WTC11 (cell line): ENCODE measurements at regions of chr18 and their contacts with region 1.

Region 1: GRCh38 chr18:62982600-62983251 is 267.4 kb downstream of the PHLPP1 start:
- DNase-seq: peak; percentile 61
- ATAC-seq: peak; percentile 90
- H3K4me3 Mint-ChIP-seq: no peak overlapping the region
- H3K27ac Mint-ChIP-seq: no peak overlapping the region
- H3K4me1 Mint-ChIP-seq: peaks cover 12% of the 10 kb centered on the region
- H3K27me3 Mint-ChIP-seq: no peaks in the 10 kb centered on the region
- CTCF ChIP-seq: peak; percentile 76

Region 2: GRCh38 chr18:62584241-62585120 is 398.2 kb before region 1 on chr18:
- CTCF ChIA-PET with region 1: interaction called, 26 read pairs
- POLR2A ChIA-PET with region 1: no interaction called
- DNase-seq: peak; percentile 93
- ATAC-seq: peak; percentile 83
- H3K4me3 Mint-ChIP-seq: peak overlapping the region; percentile 54
- H3K27ac Mint-ChIP-seq: peak overlapping the region; percentile 85
- H3K4me1 Mint-ChIP-seq: peaks cover 29% of the 10 kb centered on the region
- H3K27me3 Mint-ChIP-seq: no peaks in the 10 kb centered on the region
- CTCF ChIP-seq: peak; percentile 80

Region 3: DNA sequence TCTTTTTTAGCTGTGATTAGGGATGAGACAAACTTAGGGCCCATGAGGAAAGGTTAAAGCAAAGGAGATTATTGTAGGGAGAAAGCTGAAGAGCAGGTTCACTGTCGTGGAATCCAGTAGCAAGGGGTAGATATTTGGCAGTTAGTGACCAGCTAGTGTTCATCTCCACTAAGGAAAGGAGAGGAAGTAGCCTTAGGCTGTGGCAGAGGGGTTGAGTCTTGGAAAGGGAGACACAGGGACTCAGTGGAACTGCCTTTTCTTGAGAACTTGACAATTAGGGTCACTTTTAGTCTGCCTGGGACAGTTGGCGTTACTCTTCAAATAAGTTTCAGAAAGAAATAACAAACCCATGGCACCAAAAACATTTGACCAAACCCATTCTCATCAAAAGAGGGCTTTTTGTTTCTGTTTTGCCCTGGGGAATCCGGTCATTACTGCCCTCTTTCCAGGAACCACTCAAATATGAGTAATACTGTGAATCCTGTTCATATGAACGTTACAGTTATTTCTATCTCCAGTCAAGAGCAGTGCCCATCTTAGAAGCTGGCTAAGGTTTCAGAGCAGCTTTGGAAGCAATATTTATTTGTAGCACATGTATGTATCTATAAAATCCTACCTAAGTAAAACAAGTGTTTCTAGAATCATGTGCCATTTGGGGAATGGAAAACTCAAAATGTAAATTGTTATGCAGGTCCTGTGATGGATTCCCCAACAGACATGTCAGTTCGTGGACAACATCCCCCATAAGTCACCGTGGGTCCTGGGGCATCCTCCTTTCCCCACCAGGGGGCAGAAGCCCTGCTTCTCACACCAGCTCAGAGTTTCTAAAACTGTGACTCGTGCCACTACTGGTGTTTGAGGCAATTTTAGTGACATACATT is 344.7 kb before region 1 on chr18:
- CTCF ChIA-PET with region 1: interaction called, 10 read pairs
- POLR2A ChIA-PET with region 1: no interaction called
- DNase-seq: peak; percentile 78
- ATAC-seq: peak; percentile 85
- H3K4me3 Mint-ChIP-seq: no peak overlapping the region
- H3K27ac Mint-ChIP-seq: peak overlapping the region; percentile 13; the same call in 1 of the 2 replicates
- H3K4me1 Mint-ChIP-seq: peaks cover 18% of the 10 kb centered on the region
- H3K27me3 Mint-ChIP-seq: no peaks in the 10 kb centered on the region
- CTCF ChIP-seq: peak; percentile 75

Region 4: GRCh38 chr18:62672600-62672999 is 310.1 kb before region 1 on chr18:
- CTCF ChIA-PET with region 1: no interaction called
- POLR2A ChIA-PET with region 1: no interaction called
- DNase-seq: no peak
- ATAC-seq: no peak
- H3K4me3 Mint-ChIP-seq: no peak overlapping the region
- H3K27ac Mint-ChIP-seq: no peak overlapping the region
- H3K4me1 Mint-ChIP-seq: no peaks in the 10 kb centered on the region
- H3K27me3 Mint-ChIP-seq: no peaks in the 10 kb centered on the region
- CTCF ChIP-seq: no peak

Region 5: DNA sequence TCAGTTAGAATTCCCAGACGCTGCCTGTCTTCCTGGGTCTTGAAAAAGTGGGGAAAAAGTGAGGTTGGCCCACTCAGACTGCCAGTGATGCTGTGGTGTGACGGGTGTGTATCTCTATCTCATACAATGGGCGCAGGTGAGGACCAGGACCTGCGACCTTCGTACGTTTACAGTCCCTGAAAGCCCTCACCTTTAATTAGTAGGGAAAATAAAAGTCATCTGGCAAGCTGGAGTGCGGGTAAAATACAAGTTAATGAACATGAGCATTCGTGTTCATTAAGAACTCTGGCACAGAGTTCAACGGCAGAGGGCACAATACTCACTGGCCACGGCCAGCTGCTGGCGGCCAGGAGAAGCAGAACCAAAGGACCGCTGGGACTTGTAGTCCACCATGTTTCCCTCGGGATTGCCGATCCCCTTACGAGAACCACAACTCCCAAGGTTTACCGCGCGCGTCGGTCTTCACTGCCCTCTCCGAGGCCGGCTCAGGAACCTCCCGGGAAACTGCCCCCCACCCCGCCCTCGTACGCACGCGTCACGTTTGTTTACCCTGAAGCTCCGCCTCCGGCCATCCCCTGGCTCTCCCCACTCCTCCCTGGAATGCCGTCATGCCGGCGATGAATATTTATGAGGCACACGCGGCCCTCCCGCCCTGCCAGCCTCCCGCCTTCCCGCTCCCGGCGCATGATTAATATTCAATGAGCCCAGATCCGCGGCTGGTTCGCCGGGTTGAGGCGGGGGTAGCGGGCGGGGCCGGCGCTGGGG is 267.9 kb before region 1 on chr18:
- CTCF ChIA-PET with region 1: interaction called, 12 read pairs
- POLR2A ChIA-PET with region 1: no interaction called
- DNase-seq: peak; percentile 100
- ATAC-seq: peak; percentile 91
- H3K4me3 Mint-ChIP-seq: peak overlapping the region; percentile 75
- H3K27ac Mint-ChIP-seq: peak overlapping the region; percentile 99
- H3K4me1 Mint-ChIP-seq: peaks cover 34% of the 10 kb centered on the region
- H3K27me3 Mint-ChIP-seq: no peaks in the 10 kb centered on the region
- CTCF ChIP-seq: 0 out of 2 replicates have a peak, but pooled peaks have one; percentile 20

Region 6: DNA sequence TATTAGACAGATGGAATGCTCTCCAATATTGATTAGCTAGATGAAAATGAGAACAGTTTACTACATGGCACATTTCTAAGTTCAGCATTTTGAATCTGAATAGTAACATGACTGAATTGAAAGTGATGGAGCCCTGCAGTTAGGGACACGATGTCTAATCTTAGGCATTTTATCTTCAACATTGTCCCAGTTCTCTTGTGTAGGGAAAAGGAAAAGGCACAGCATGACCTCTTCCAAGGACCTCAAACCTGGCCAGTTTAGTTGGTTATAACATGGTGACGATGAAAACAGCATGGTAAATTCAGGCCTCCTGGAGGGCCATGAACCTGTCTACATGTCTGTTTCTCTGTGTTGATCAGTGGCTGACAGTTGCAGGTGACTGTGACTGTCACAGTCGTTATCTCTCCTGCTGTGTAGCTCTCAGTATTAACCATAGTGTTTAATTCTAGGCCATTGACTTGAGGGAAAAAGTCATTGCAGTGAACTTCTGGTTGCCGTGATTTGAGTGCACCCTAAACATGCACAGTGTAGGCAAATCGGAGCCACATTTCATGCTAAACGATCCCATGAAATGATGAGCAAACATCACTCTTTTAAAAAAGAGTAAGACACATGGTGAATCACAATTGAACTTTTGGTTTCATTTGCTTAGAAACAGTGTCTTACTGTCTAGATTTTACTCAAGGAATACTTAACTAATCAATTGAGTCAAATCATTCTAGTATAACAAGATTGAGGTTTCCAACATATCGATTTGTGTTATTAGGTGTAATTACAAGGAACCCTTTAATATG is 137.7 kb before region 1 on chr18:
- CTCF ChIA-PET with region 1: no interaction called
- POLR2A ChIA-PET with region 1: no interaction called
- DNase-seq: no peak
- ATAC-seq: no peak
- H3K4me3 Mint-ChIP-seq: no peak overlapping the region
- H3K27ac Mint-ChIP-seq: 0 out of 2 replicates have a peak overlapping the region, but pooled peaks have one; percentile 52
- H3K4me1 Mint-ChIP-seq: peaks cover 61% of the 10 kb centered on the region
- H3K27me3 Mint-ChIP-seq: no peaks in the 10 kb centered on the region
- CTCF ChIP-seq: no peak

Region 7: GRCh38 chr18:63326011-63326410 is 343.3 kb after region 1 on chr18:
- CTCF ChIA-PET with region 1: no interaction called
- POLR2A ChIA-PET with region 1: no interaction called
- DNase-seq: no peak
- ATAC-seq: no peak
- H3K4me3 Mint-ChIP-seq: no peak overlapping the region
- H3K27ac Mint-ChIP-seq: no peak overlapping the region
- H3K4me1 Mint-ChIP-seq: peaks cover 10% of the 10 kb centered on the region
- H3K27me3 Mint-ChIP-seq: peaks cover 4% of the 10 kb centered on the region; the same call in 1 of the 2 replicates
- CTCF ChIP-seq: no peak